ENCODE measurements at regions of chrX and their contacts with region 1.

Region 1: DNA sequence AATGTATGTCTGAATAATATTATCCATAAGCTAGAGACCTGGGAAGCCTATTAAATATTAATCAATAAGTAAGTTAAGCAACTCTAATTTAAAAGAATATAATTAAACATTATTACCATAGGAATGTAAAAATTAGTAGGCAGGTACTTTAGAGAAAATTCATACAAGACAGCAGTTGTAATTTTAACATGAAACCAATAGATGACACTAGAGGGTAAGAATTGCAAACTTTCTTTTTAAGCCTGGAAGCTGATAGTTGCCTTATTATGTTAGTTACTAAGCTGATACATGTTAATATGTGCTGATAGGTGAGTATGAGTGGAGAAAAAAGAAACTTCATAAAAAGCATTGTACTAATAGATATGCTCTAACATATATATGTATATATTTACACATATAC is 1157.4 kb downstream of the FAM133A start:
- DNase-seq: peak; percentile 1
- H3K4me3 ChIP-seq: no peak overlapping the region
- H3K27ac ChIP-seq: no peak overlapping the region
- H3K4me1 ChIP-seq: no peaks in the 10 kb centered on the region
- H3K27me3 ChIP-seq: no peaks in the 10 kb centered on the region
- CTCF ChIP-seq: peak; percentile 53 to 69

Region 2: DNA sequence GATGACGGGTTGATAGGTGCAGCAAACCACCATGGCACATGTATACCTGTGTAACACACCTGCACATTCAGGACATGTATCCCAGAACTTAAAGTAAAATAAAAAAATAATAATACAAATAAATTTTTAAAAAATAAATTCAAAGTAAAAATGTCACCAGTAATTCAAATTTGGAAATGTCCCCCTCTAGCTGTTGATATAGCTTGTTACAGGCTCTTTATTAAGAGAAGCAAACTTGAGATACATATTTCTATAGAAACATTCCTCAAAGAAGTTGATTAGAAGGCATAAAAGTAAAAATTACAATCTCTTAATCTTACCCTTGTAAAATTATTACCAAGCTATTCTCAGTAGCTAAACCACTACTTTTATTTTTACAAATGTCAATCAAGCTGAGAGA is 239.7 kb after region 1 on chrX:
- CTCF ChIA-PET with region 1: interaction called, 3 read pairs
- dilution Hi-C with region 1: no loop called
- in situ Hi-C with region 1: no loop called
- intact Hi-C with region 1: loop called (anchors 5 kb)
- DNase-seq: no peak
- H3K4me3 ChIP-seq: no peak overlapping the region
- H3K27ac ChIP-seq: no peak overlapping the region
- H3K4me1 ChIP-seq: peaks cover 2% of the 10 kb centered on the region
- H3K27me3 ChIP-seq: peaks cover 2% of the 10 kb centered on the region
- CTCF ChIP-seq: peak; percentile 5 to 45

Measured in mammary epithelial cell (primary cell).